ENCODE measurements at regions of chr5 and their contacts with region 1.

Region 1: GRCh38 chr5:97839341-97840081 is 656.5 kb upstream of the RIOK2 start:
- DNase-seq: no peak
- H3K4me3 ChIP-seq: no peak overlapping the region
- H3K27ac ChIP-seq: no peak overlapping the region
- H3K4me1 ChIP-seq: no peaks in the 10 kb centered on the region
- H3K27me3 ChIP-seq: no peaks in the 10 kb centered on the region
- CTCF ChIP-seq: no peak
- POLR2A ChIP-seq: no peak

Region 2: GRCh38 chr5:97042996-97043395 is 796.5 kb before region 1 on chr5:
- intact Hi-C with region 1: no loop called
- DNase-seq: no peak
- H3K4me3 ChIP-seq: no peak overlapping the region
- H3K27ac ChIP-seq: no peak overlapping the region
- H3K4me1 ChIP-seq: no peaks in the 10 kb centered on the region
- H3K27me3 ChIP-seq: no peaks in the 10 kb centered on the region
- CTCF ChIP-seq: no peak
- POLR2A ChIP-seq: no peak

Region 3: GRCh38 chr5:97208714-97209113 is 630.8 kb before region 1 on chr5:
- intact Hi-C with region 1: loop called (anchors 5 kb)
- DNase-seq: no peak
- H3K4me3 ChIP-seq: no peak overlapping the region
- H3K27ac ChIP-seq: no peak overlapping the region
- H3K4me1 ChIP-seq: no peaks in the 10 kb centered on the region
- H3K27me3 ChIP-seq: no peaks in the 10 kb centered on the region
- CTCF ChIP-seq: no peak
- POLR2A ChIP-seq: no peak

Region 4: GRCh38 chr5:97801497-97801896 is 38.0 kb before region 1 on chr5:
- intact Hi-C with region 1: loop called (anchors 2 kb)
- DNase-seq: no peak
- H3K4me3 ChIP-seq: no peak overlapping the region
- H3K27ac ChIP-seq: no peak overlapping the region
- H3K4me1 ChIP-seq: no peaks in the 10 kb centered on the region
- H3K27me3 ChIP-seq: no peaks in the 10 kb centered on the region
- CTCF ChIP-seq: no peak
- POLR2A ChIP-seq: no peak

Measured in breast epithelium (tissue), 4 donors.